ENCODE measurements at regions of chr9 and their contacts with region 1.

Region 1: GRCh38 chr9:37485389-37486219 is at the start of gene POLR1E:
- DNase-seq: peak; percentile 96
- H3K4me3 ChIP-seq: peak within 1 kb of the TSS; percentile 89 to 90 (median 89)
- H3K27ac ChIP-seq: peak within 1 kb of the TSS; percentile 55
- H3K4me1 ChIP-seq: peaks cover 17% of the 10 kb centered on the region
- H3K27me3 ChIP-seq: no peaks in the 10 kb centered on the region
- CTCF ChIP-seq: no peak
- total RNA-seq, gene POLR1E: 33.8 to 34.5 TPM

Region 2: GRCh38 chr9:37200433-37201005 is 285.1 kb before region 1 on chr9:
- CTCF ChIA-PET with region 1: no interaction called
- dilution Hi-C with region 1: no loop called
- in situ Hi-C with region 1: no loop called
- intact Hi-C with region 1: no loop called
- DNase-seq: peak; percentile 74
- H3K4me3 ChIP-seq: no peak overlapping the region
- H3K27ac ChIP-seq: no peak overlapping the region
- H3K4me1 ChIP-seq: peaks cover 26% of the 10 kb centered on the region
- H3K27me3 ChIP-seq: no peaks in the 10 kb centered on the region
- CTCF ChIP-seq: no peak

Region 3: DNA sequence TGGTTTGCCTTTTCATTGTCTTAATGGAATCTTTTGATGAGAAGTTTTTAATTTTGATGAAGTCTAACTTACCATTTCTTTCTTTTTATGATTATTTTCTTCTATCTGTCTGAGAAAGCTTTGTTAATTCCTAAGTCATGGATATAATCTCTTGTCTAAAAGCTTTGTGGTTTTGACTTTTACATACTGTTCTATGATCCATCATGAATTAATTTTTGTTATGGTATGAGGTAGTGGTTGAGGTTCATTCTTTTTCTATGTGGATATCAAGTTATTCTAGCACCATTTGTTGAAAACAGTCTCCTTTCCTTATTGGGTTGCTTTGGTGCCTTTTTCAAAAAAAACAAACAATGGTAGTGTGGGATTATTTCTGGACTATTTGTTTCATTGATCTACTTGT is 70.2 kb after region 1 on chr9:
- CTCF ChIA-PET with region 1: no interaction called
- dilution Hi-C with region 1: no loop called
- in situ Hi-C with region 1: no loop called
- intact Hi-C with region 1: no loop called
- DNase-seq: no peak
- H3K4me3 ChIP-seq: no peak overlapping the region
- H3K27ac ChIP-seq: no peak overlapping the region
- H3K4me1 ChIP-seq: no peaks in the 10 kb centered on the region
- H3K27me3 ChIP-seq: no peaks in the 10 kb centered on the region
- CTCF ChIP-seq: no peak

Region 4: GRCh38 chr9:37575921-37576721 is 90.5 kb after region 1 on chr9 and contains the start of gene FBXO10:
- CTCF ChIA-PET with region 1: no interaction called
- dilution Hi-C with region 1: loop called (anchors 5 kb)
- in situ Hi-C with region 1: no loop called
- intact Hi-C with region 1: no loop called
- DNase-seq: peak; percentile 57
- H3K4me3 ChIP-seq: peak within 1 kb of the TSS; percentile 77 to 84 (median 81)
- H3K27ac ChIP-seq: peak within 1 kb of the TSS; percentile 46
- H3K4me1 ChIP-seq: peaks cover 11% of the 10 kb centered on the region
- H3K27me3 ChIP-seq: no peaks in the 10 kb centered on the region
- CTCF ChIP-seq: no peak
- total RNA-seq, gene FBXO10: 3.7 to 11.8 TPM

Region 5: GRCh38 chr9:37746848-37747753 is 261.5 kb after region 1 on chr9:
- CTCF ChIA-PET with region 1: no interaction called
- dilution Hi-C with region 1: loop called (anchors 25 kb)
- in situ Hi-C with region 1: loop called in 1 of 2 experiments (anchors 25 kb)
- intact Hi-C with region 1: loop called (anchors 1 kb)
- DNase-seq: peak; percentile 41
- H3K4me3 ChIP-seq: no peak overlapping the region
- H3K27ac ChIP-seq: no peak overlapping the region
- H3K4me1 ChIP-seq: no peaks in the 10 kb centered on the region
- H3K27me3 ChIP-seq: no peaks in the 10 kb centered on the region
- CTCF ChIP-seq: peak; percentile 93 to 98

Region 6: DNA sequence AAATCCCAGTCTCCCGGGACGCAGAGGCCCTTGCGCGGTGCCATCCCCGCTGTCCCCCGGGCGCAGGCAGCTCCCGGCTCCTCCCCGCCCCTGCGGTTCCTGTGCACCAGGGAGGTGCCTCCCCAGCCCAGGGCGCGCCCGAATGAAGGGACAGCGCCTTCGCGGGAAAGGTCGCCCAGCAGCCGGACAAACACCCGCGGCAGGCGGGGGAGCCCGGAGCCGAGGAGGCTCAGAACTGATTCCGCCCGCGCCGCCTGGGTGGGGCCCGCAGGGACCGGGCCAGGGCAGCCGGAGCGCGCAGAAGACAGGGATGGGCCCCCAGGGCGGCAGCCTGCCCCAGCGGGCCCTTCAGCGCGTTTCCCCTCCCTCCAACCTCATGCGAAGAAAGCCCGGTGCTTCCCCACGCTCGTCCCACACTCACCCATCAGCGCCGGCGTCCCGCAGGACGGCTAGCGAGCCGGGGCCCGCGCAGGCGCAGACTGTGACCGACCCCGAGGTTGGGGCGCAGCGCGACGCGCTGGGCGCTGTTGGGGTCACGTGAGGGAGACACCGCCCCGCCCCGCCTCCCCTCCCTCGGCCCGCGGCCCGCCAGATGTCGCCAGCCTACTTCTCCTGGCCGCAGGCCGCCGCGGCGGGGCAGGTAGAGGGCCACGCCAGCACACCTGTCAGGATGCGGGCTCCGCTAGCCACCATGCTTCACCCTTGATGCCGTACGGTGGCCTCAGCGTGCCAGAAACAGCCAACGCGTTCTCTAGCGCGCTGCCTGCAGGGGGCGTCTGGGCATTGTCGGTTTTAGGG is 418.2 kb after region 1 on chr9 and contains the start of gene SLC25A51:
- CTCF ChIA-PET with region 1: interaction called, 4 read pairs
- dilution Hi-C with region 1: no loop called
- in situ Hi-C with region 1: no loop called
- intact Hi-C with region 1: loop called (anchors 1 kb)
- DNase-seq: peak; percentile 94
- H3K4me3 ChIP-seq: peak within 1 kb of the TSS; percentile 60 to 83 (median 78)
- H3K27ac ChIP-seq: peak within 1 kb of the TSS; percentile 67
- H3K4me1 ChIP-seq: peaks cover 25% of the 10 kb centered on the region
- H3K27me3 ChIP-seq: no peaks in the 10 kb centered on the region
- CTCF ChIP-seq: peak; percentile 92 to 98
- total RNA-seq, gene SLC25A51: 30.0 to 78.0 TPM

Region 7: DNA sequence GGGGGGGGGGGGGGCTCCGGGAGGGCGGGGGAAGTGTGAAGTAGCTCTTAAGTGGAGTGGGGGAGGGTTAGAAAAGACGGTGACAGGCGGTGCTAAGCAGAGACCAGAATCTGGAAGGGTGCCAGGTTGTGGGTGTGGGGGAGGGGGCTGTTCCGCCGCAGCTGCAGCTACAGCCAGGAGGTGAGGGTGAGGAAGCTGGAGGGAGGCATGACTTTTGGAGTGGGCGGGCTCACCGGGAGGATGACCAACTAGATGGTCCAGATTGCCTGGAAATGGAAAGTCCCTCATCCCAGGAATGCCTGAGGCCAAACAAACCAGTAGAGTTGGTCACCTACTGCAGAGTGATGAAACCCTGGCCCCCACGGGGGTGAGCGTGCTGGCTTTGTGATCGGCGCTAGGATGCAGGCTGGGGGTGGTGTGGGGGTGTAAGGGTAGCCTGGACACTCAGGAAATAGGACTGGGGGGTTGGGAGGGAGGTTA is 741.5 kb after region 1 on chr9:
- CTCF ChIA-PET with region 1: interaction called, 32 read pairs
- dilution Hi-C with region 1: no loop called
- in situ Hi-C with region 1: no loop called
- intact Hi-C with region 1: no loop called
- DNase-seq: peak; percentile 95
- H3K4me3 ChIP-seq: no peak overlapping the region
- H3K27ac ChIP-seq: no peak overlapping the region
- H3K4me1 ChIP-seq: peaks cover 7% of the 10 kb centered on the region
- H3K27me3 ChIP-seq: no peaks in the 10 kb centered on the region
- CTCF ChIP-seq: no peak

Region 8: DNA sequence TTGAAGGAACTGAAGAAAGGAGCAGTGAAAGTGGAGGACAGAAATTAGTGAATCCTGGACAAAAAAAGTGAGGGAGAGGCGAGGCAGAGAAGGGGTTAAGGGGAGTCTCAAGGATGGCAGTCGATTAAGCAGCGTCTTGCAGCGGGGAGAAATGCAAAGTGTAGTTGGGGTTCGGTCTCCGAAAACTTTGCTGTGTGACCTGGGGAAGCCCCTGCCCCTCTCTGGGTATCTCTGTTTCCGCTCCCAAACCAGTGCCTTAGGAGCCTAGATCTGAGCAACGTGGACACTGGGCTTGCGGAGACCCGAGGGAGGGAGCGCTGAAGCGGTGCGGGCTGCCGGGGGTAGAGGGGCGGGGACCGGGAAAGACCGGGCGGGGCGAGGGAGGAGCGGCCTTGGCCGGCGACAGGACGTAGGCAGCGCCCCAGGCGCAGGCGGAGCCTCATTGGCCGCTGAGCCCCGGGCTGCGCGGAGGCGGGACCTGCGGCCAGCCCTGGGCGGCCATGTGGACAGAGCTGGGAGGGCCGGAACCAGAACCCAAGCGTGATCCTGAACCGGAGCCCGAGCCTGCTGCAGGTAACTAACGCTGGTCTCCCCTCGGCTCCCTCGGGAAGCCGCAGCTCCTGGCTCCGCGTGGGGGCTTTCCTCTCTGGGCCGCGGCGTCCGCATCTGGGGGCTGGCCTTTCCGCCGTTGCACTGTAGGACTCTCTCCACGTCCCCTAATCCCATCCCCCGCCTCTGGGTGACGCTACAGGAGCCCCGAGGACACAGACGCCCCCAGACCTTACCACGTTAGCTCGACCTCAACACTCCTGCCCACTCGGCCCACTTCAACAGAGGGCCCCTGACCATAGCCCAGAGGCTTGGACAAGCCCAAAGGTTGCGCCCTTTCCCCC is 906.9 kb after region 1 on chr9 and contains the start of gene ALDH1B1:
- CTCF ChIA-PET with region 1: no interaction called
- dilution Hi-C with region 1: no loop called
- in situ Hi-C with region 1: no loop called
- intact Hi-C with region 1: loop called (anchors 10 kb)
- DNase-seq: peak; percentile 80
- H3K4me3 ChIP-seq: peak within 1 kb of the TSS; percentile 68 to 73 (median 72)
- H3K27ac ChIP-seq: peak within 1 kb of the TSS; percentile 25
- H3K4me1 ChIP-seq: no peaks in the 10 kb centered on the region
- H3K27me3 ChIP-seq: no peaks in the 10 kb centered on the region
- CTCF ChIP-seq: peak in 1 of 2 donors; percentile 17
- total RNA-seq, gene ALDH1B1: 30.0 to 69.8 TPM